PC-3 (cell line): ENCODE measurements at regions of chr1 and their contacts with region 1.

Region 1: DNA sequence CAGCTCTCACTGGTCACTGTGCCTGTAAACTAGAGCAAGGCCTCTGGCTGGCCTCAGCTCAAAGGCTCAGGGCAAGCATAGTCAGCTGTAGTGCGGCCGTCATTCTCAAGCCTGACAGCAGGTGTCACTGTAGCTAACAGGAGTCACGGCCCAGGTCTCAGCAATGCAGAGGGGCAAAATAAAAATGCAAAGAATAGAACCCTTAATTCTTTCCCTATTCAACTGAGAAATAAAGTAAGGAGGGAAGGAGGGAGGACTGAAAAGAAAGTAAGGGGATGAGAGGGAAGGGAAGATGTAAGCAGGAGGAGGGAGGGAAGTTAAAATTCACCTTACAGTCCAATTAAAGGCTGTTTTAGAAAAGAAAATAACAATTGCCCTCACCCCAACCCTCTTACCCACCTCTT is 106.1 kb downstream of the KIAA0319L start:
- DNase-seq: peak; percentile 83
- ATAC-seq: peak; percentile 79
- H3K4me3 ChIP-seq: no peak overlapping the region
- H3K27ac ChIP-seq: no peak overlapping the region
- H3K4me1 ChIP-seq: peaks cover 36% of the 10 kb centered on the region
- H3K27me3 ChIP-seq: no peaks in the 10 kb centered on the region
- CTCF ChIP-seq: peak; percentile 92

Region 2: GRCh38 chr1:35298464-35298863 is 152.7 kb before region 1 on chr1:
- CTCF ChIA-PET with region 1: no interaction called
- POLR2A ChIA-PET with region 1: no interaction called
- intact Hi-C with region 1: no loop called
- DNase-seq: peak; percentile 37
- ATAC-seq: peak; percentile 64
- H3K4me3 ChIP-seq: no peak overlapping the region
- H3K27ac ChIP-seq: no peak overlapping the region
- H3K4me1 ChIP-seq: no peaks in the 10 kb centered on the region
- H3K27me3 ChIP-seq: no peaks in the 10 kb centered on the region
- CTCF ChIP-seq: peak; percentile 63

Region 3: DNA sequence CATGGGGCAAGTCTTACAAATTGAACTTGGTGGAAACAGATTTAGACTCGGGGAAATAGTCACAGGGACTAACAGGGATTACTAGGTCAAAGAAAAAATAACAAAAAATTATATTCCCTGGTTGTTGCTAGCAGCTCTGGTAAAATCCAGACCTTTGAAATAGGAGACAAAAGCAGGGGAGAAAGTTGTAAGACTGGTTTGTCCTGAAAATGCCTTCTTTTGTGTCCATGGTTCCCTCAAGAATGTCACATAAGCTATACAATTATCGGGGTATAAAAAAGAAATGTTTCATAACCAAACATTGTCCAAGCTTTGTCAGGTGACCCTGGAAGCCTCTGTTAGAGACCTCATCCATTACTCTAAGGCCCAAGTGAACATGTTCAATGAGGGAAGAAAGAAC is 73.0 kb after region 1 on chr1:
- CTCF ChIA-PET with region 1: interaction called, 10 read pairs
- POLR2A ChIA-PET with region 1: no interaction called
- intact Hi-C with region 1: no loop called
- DNase-seq: peak; percentile 76
- ATAC-seq: peak; percentile 18; the same call in 1 of the 2 replicates
- H3K4me3 ChIP-seq: no peak overlapping the region; the same call in 1 of the 2 replicates
- H3K27ac ChIP-seq: no peak overlapping the region
- H3K4me1 ChIP-seq: peaks cover 17% of the 10 kb centered on the region
- H3K27me3 ChIP-seq: no peaks in the 10 kb centered on the region
- CTCF ChIP-seq: no peak

Region 4: GRCh38 chr1:35557292-35558063 is 106.4 kb after region 1 on chr1 and contains the starts of genes KIAA0319L and NCDN:
- CTCF ChIA-PET with region 1: interaction called, 10 read pairs
- POLR2A ChIA-PET with region 1: no interaction called
- intact Hi-C with region 1: loop called (anchors 2 kb)
- DNase-seq: peak; percentile 94
- ATAC-seq: peak; percentile 76
- H3K4me3 ChIP-seq: peak within 1 kb of the TSS; percentile 78
- H3K27ac ChIP-seq: peak within 1 kb of the TSS; percentile 91
- H3K4me1 ChIP-seq: peaks cover 33% of the 10 kb centered on the region
- H3K27me3 ChIP-seq: no peaks in the 10 kb centered on the region
- CTCF ChIP-seq: no peak
- total RNA-seq, gene KIAA0319L: 20.9 and 26.7 TPM in 2 replicates
- total RNA-seq, gene NCDN: 25.2 and 30.2 TPM in 2 replicates

Region 5: DNA sequence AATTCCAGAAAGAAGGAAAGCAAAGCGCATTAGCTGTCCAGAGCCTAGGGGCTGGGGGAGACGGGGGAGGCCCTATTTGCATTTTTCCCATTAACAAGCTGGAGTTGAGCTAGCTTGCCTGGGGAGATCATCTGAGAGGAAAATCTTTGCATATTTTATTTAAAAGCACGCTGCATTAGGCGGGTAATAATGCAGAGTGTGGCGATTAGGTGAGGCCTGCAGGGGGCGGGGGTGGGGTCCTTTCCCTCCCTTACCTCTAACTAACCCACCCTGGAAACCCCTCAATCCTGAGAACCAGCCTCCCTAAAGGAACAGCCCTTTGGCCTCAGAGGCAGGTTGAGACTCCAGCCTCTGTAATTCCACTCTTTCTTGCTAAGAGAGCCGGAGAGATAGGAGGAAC is 251.4 kb after region 1 on chr1:
- CTCF ChIA-PET with region 1: interaction called, 14 read pairs
- POLR2A ChIA-PET with region 1: no interaction called
- intact Hi-C with region 1: no loop called
- DNase-seq: no peak
- ATAC-seq: no peak
- H3K4me3 ChIP-seq: no peak overlapping the region
- H3K27ac ChIP-seq: no peak overlapping the region
- H3K4me1 ChIP-seq: no peaks in the 10 kb centered on the region
- H3K27me3 ChIP-seq: peaks cover 35% of the 10 kb centered on the region
- CTCF ChIP-seq: 0 out of 2 replicates have a peak, but pooled peaks have one; percentile 10

Region 6: DNA sequence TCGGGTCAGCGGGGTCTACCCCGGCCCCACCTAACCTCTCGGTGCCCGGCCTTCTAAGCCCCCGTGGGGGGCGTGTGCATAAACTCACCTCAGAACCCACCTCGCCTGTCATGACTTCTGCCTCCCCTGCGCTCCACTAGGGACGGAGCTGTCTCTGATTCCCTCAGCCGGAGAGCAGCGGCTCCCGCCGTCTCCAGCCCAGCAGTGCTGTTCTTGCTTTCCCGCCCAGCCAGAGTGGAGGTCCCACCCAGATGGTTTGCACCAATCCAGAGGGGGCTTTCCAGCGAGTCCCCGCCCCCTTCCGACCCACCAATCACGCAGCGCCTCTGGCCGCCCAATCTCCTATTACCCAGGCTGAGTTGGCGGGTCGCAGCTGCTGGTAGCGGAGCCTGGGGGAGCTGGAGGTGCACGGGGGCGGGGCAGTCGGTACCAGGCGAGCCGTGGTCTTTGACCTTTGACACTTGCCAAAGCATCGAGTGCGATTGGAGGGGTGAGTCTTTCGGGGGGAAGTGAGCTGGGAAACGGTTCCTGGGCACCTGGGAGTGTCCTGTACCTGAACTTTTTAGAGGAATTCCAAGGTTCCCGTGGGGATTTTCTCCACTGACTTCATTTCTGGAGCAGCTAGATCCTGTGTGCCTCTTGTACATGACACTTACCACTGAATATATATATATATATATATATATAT is 318.8 kb after region 1 on chr1 and contains the start of gene CLSPN:
- CTCF ChIA-PET with region 1: interaction called, 3 read pairs
- POLR2A ChIA-PET with region 1: no interaction called
- intact Hi-C with region 1: loop called (anchors 5 kb)
- DNase-seq: peak; percentile 94
- ATAC-seq: peak; percentile 94
- H3K4me3 ChIP-seq: peak within 1 kb of the TSS; percentile 100
- H3K27ac ChIP-seq: peak within 1 kb of the TSS; percentile 54
- H3K4me1 ChIP-seq: no peaks in the 10 kb centered on the region; the same call in 1 of the 2 replicates
- H3K27me3 ChIP-seq: no peaks in the 10 kb centered on the region
- CTCF ChIP-seq: no peak
- total RNA-seq, gene CLSPN: 21.5 and 29.5 TPM in 2 replicates